Activated naive CD4-positive, alpha-beta T cell treated with anti-CD3 and anti-CD28 coated beads for 36 hours (primary cell): ENCODE measurements at regions of chr3 and their contacts with region 1.

Region 1: GRCh38 chr3:14921078-14921616 is 26.2 kb upstream of the NR2C2 start:
- DNase-seq: peak; percentile 88
- H3K4me3 Mint-ChIP-seq: no peak overlapping the region
- H3K27ac Mint-ChIP-seq: no peak overlapping the region
- H3K4me1 Mint-ChIP-seq: no peaks in the 10 kb centered on the region
- H3K27me3 Mint-ChIP-seq: no peaks in the 10 kb centered on the region

Region 2: GRCh38 chr3:14261229-14261628 is 659.9 kb before region 1 on chr3:
- CTCF ChIA-PET with region 1: no interaction called
- intact Hi-C with region 1: loop called (anchors 2 kb)
- DNase-seq: peak; percentile 86
- H3K4me3 Mint-ChIP-seq: no peak overlapping the region
- H3K27ac Mint-ChIP-seq: no peak overlapping the region
- H3K4me1 Mint-ChIP-seq: no peaks in the 10 kb centered on the region
- H3K27me3 Mint-ChIP-seq: no peaks in the 10 kb centered on the region

Region 3: DNA sequence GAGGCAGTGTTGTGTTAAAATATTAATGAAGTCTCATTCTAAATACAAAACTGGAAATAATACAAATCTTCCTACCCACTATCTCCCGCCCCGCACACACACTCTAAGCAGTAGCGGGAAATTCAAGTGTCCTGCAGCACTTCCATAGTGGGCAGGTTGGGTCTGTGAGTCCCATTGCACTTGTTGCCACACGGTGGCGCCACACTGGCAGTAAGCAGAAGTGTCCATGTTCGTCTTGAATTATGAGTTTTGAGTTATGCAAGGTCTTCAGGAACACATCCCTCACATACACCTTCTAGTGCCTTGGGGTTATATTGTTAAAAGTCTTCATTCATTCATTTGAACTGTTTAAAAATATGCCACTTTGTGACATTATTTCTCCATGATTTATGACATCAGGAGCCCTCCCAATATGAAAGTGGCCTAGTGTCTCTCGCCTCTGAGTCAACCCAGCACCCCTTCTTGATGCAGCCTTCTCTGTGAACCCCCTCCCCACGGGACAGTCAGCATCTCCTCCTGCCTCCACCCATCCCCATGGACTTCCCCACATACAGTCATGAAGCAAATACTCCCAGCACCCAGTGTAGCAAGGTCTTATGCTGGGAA is 287.2 kb before region 1 on chr3:
- CTCF ChIA-PET with region 1: interaction called, 9 read pairs
- intact Hi-C with region 1: loop called (anchors 1 kb)
- DNase-seq: peak; percentile 72
- H3K4me3 Mint-ChIP-seq: no peak overlapping the region
- H3K27ac Mint-ChIP-seq: no peak overlapping the region
- H3K4me1 Mint-ChIP-seq: no peaks in the 10 kb centered on the region
- H3K27me3 Mint-ChIP-seq: peaks cover 29% of the 10 kb centered on the region

Region 4: GRCh38 chr3:14780927-14781507 is 140.1 kb before region 1 on chr3:
- CTCF ChIA-PET with region 1: interaction called, 14 read pairs
- intact Hi-C with region 1: no loop called
- DNase-seq: peak; percentile 64
- H3K4me3 Mint-ChIP-seq: no peak overlapping the region
- H3K27ac Mint-ChIP-seq: no peak overlapping the region
- H3K4me1 Mint-ChIP-seq: no peaks in the 10 kb centered on the region
- H3K27me3 Mint-ChIP-seq: peaks cover 3% of the 10 kb centered on the region

Region 5: GRCh38 chr3:14909250-14909649 is 11.9 kb before region 1 on chr3:
- CTCF ChIA-PET with region 1: interaction called, 11 read pairs
- intact Hi-C with region 1: no loop called
- DNase-seq: no peak
- H3K4me3 Mint-ChIP-seq: no peak overlapping the region
- H3K27ac Mint-ChIP-seq: no peak overlapping the region
- H3K4me1 Mint-ChIP-seq: no peaks in the 10 kb centered on the region
- H3K27me3 Mint-ChIP-seq: no peaks in the 10 kb centered on the region

Region 6: DNA sequence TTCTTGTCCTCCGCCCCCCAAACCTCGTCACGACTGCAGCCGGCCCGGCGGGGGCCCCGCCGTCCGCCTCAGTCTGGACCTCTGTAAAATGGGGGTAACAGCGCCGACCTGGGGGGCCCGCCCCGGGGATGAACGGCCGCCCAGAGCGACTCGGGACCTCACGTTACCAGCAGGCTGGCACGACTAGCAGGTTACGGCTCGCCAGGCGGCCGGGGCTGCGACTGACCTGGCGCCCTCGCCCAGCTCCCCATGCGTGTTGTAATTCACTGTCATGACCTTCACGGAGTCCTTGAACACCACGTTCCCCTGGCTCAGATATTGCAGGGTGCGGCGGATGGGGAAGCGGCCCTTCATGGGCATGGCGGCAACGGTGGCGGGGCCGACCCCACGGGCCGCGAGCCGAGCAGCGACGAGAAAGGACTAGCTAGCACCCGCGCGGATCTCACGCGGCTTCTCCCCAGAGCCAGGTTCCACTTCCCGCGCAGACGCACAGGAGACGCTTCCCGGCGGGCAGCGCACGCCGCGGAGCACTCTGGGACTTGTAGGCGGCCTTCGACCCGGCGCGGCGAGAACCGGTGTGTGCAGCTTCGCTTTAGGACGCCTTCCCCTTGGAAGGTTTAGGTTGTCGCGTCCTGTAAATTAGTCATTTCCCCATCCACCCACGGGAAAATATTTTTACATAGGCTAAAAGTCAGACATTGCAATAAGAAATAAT is 143.8 kb after region 1 on chr3 and contains the start of gene MRPS25:
- CTCF ChIA-PET with region 1: interaction called, 3 read pairs
- intact Hi-C with region 1: loop called (anchors 2 kb)
- DNase-seq: peak; percentile 93
- H3K4me3 Mint-ChIP-seq: peak within 1 kb of the TSS; percentile 96
- H3K27ac Mint-ChIP-seq: peak within 1 kb of the TSS; percentile 87
- H3K4me1 Mint-ChIP-seq: peaks cover 25% of the 10 kb centered on the region
- H3K27me3 Mint-ChIP-seq: no peaks in the 10 kb centered on the region
- total RNA-seq, gene MRPS25: 55.0 to 57.5 TPM

Region 7: GRCh38 chr3:15120986-15121385 is 199.8 kb after region 1 on chr3:
- CTCF ChIA-PET with region 1: interaction called, 3 read pairs
- intact Hi-C with region 1: loop called (anchors 5 kb)
- DNase-seq: no peak
- H3K4me3 Mint-ChIP-seq: no peak overlapping the region
- H3K27ac Mint-ChIP-seq: no peak overlapping the region
- H3K4me1 Mint-ChIP-seq: peaks cover 5% of the 10 kb centered on the region
- H3K27me3 Mint-ChIP-seq: peaks cover 6% of the 10 kb centered on the region